ENCODE measurements at regions of chr4 and their contacts with region 1.

Region 1: DNA sequence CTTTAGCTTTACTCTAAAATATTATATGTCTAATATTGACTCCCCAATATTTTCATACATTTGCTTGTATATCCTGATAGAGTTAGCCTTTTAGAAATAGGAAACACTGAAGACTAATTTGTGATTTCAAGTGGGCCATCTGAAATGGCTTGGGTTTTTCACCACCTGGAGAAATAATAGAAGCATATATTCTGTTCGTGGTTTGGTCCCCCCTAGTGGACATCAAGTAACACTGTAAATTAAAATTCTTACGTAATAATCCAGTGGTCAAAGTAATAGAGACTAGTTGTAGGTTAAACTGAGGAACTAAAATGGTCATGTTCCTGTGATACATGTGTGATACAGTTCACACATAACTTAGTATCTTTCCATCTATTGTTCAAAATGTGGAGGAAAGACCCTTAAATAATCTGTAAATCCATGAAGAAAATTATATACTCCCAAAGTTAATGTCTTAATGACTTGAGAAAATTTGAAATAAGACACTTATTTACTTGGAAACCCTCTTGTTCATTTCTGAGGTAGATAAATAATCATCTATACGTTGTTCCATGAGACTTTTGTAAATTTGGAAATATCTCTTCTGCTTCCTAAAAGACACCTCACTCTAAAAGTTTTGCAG is 79.8 kb upstream of the SMARCAD1 start:
- DNase-seq: no peak
- H3K4me3 ChIP-seq: no peak overlapping the region
- H3K27ac ChIP-seq: no peak overlapping the region
- H3K4me1 ChIP-seq: no peaks in the 10 kb centered on the region
- H3K27me3 ChIP-seq: no peaks in the 10 kb centered on the region
- CTCF ChIP-seq: peak; percentile 52

Region 2: DNA sequence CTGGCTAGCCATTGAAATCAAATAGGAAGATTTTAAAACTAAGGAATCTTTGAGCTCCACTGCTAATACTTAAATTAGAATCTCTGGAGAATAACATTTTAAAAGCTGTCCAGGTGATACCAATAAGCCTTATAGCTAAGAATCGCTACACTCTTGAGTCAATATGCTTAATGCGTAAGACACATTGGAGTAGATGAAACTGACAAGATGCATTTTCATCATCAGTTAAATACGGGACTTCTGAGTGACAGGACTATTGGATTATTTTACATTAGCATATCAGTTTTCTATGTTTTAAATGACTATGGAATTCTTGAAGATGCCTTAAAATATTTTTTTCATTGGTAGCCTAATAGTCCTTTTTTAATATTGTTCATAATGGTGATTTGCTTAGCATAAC is 219.0 kb before region 1 on chr4:
- intact Hi-C with region 1: loop called (anchors 10 kb)
- DNase-seq: no peak
- H3K4me3 ChIP-seq: no peak overlapping the region
- H3K27ac ChIP-seq: no peak overlapping the region
- H3K4me1 ChIP-seq: no peaks in the 10 kb centered on the region
- H3K27me3 ChIP-seq: no peaks in the 10 kb centered on the region
- CTCF ChIP-seq: no peak

Region 3: GRCh38 chr4:94076498-94076897 is 51.3 kb before region 1 on chr4:
- intact Hi-C with region 1: no loop called
- DNase-seq: no peak
- H3K4me3 ChIP-seq: no peak overlapping the region
- H3K27ac ChIP-seq: no peak overlapping the region
- H3K4me1 ChIP-seq: no peaks in the 10 kb centered on the region
- H3K27me3 ChIP-seq: no peaks in the 10 kb centered on the region
- CTCF ChIP-seq: no peak

Region 4: GRCh38 chr4:94534401-94535312 is 406.8 kb after region 1 on chr4:
- intact Hi-C with region 1: no loop called
- DNase-seq: no peak
- H3K4me3 ChIP-seq: no peak overlapping the region
- H3K27ac ChIP-seq: no peak overlapping the region
- H3K4me1 ChIP-seq: no peaks in the 10 kb centered on the region
- H3K27me3 ChIP-seq: no peaks in the 10 kb centered on the region
- CTCF ChIP-seq: no peak

Measured in colonic mucosa (tissue), 4 donors.